Calu3 (cell line): ENCODE measurements at regions of chr4 and their contacts with region 1.

Region 1: DNA sequence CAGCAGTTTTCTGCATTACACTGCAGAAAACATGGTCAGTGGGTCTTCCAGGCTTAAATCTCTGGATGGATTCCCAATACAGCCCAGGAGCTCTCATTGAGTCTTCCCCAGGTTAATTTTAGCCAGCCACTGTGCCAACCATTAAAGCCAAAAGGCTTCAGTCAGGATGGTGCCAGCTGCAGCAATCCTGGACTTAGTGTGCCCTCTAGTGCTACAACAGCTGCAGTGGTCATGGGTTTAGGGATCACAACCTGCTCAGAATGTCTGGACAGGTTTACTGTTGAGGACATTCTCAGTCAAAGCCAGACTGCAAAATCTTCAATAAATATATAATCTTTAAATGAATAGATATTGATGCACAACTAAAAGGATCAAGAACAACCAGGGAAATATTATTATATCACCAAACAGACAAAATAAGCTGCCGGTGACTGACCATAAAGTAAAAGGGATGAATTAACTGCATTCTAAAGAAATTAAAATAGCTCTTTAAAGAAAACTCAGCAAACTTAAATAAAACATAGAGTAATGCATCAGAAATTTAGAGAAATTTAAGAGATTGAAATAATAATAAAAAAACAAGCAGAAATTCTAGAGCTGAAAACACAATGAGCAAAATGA is 639.9 kb downstream of the SPOCK3 start:
- DNase-seq: peak; percentile 41
- H3K4me3 Mint-ChIP-seq: no peak overlapping the region
- H3K27ac Mint-ChIP-seq: no peak overlapping the region
- H3K4me1 Mint-ChIP-seq: no peaks in the 10 kb centered on the region
- H3K27me3 Mint-ChIP-seq: no peaks in the 10 kb centered on the region
- CTCF ChIP-seq: peak; percentile 53

Region 2: DNA sequence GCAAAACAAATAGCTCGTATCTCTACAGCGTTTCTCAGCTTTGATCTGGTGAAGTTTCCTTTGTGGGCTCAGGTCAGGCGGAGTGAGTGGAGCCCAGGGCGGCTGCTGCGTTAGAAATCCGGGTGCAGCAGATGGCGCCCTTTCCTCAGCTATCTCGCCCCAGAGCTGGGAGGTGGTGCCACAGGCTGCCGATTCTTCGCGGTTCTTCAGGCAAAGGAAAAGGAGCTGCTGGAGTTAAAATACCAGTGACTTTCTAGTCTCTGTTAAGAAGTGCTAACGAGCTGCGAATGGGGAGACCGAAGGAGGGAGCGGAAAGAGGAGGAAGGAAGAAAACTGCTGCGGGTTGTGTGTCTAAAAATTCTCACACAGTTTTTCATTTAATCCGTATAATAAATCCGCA is 1101.1 kb before region 1 on chr4:
- CTCF ChIA-PET with region 1: no interaction called
- intact Hi-C with region 1: loop called (anchors 2 kb)
- DNase-seq: peak; percentile 73
- H3K4me3 Mint-ChIP-seq: peak overlapping the region; percentile 58
- H3K27ac Mint-ChIP-seq: no peak overlapping the region
- H3K4me1 Mint-ChIP-seq: peaks cover 8% of the 10 kb centered on the region
- H3K27me3 Mint-ChIP-seq: no peaks in the 10 kb centered on the region
- CTCF ChIP-seq: peak; percentile 56

Region 3: GRCh38 chr4:166121897-166122296 is 472.5 kb before region 1 on chr4:
- CTCF ChIA-PET with region 1: no interaction called
- intact Hi-C with region 1: no loop called
- DNase-seq: no peak
- H3K4me3 Mint-ChIP-seq: no peak overlapping the region
- H3K27ac Mint-ChIP-seq: no peak overlapping the region
- H3K4me1 Mint-ChIP-seq: no peaks in the 10 kb centered on the region
- H3K27me3 Mint-ChIP-seq: no peaks in the 10 kb centered on the region
- CTCF ChIP-seq: no peak

Region 4: GRCh38 chr4:166252487-166253402 is 341.7 kb before region 1 on chr4:
- CTCF ChIA-PET with region 1: no interaction called
- intact Hi-C with region 1: loop called (anchors 5 kb)
- DNase-seq: peak; percentile 17
- H3K4me3 Mint-ChIP-seq: no peak overlapping the region
- H3K27ac Mint-ChIP-seq: no peak overlapping the region
- H3K4me1 Mint-ChIP-seq: no peaks in the 10 kb centered on the region
- H3K27me3 Mint-ChIP-seq: no peaks in the 10 kb centered on the region
- CTCF ChIP-seq: peak; percentile 41

Region 5: GRCh38 chr4:166324321-166324720 is 270.1 kb before region 1 on chr4:
- CTCF ChIA-PET with region 1: no interaction called
- intact Hi-C with region 1: loop called (anchors 1 kb)
- DNase-seq: peak; percentile 50
- H3K4me3 Mint-ChIP-seq: no peak overlapping the region
- H3K27ac Mint-ChIP-seq: no peak overlapping the region
- H3K4me1 Mint-ChIP-seq: peaks cover 3% of the 10 kb centered on the region
- H3K27me3 Mint-ChIP-seq: no peaks in the 10 kb centered on the region
- CTCF ChIP-seq: peak; percentile 13

Region 6: GRCh38 chr4:166996216-166996615 is 401.8 kb after region 1 on chr4:
- CTCF ChIA-PET with region 1: no interaction called
- intact Hi-C with region 1: loop called (anchors 10 kb)
- DNase-seq: no peak
- H3K4me3 Mint-ChIP-seq: no peak overlapping the region
- H3K27ac Mint-ChIP-seq: no peak overlapping the region
- H3K4me1 Mint-ChIP-seq: peaks cover 9% of the 10 kb centered on the region
- H3K27me3 Mint-ChIP-seq: no peaks in the 10 kb centered on the region
- CTCF ChIP-seq: no peak